ENCODE measurements at regions of chr2 and their contacts with region 1.

Region 1: GRCh38 chr2:200811336-200812121 is at the start of gene BZW1:
- DNase-seq: peak; percentile 94
- ATAC-seq: peak; percentile 80
- H3K4me3 Mint-ChIP-seq: peak within 1 kb of the TSS; percentile 98
- H3K27ac Mint-ChIP-seq: peak within 1 kb of the TSS; percentile 99
- H3K4me1 Mint-ChIP-seq: peaks cover 34% of the 10 kb centered on the region
- H3K27me3 Mint-ChIP-seq: no peaks in the 10 kb centered on the region
- CTCF ChIP-seq: no peak
- total RNA-seq, gene BZW1: 174 and 197 TPM in 2 replicates

Region 2: DNA sequence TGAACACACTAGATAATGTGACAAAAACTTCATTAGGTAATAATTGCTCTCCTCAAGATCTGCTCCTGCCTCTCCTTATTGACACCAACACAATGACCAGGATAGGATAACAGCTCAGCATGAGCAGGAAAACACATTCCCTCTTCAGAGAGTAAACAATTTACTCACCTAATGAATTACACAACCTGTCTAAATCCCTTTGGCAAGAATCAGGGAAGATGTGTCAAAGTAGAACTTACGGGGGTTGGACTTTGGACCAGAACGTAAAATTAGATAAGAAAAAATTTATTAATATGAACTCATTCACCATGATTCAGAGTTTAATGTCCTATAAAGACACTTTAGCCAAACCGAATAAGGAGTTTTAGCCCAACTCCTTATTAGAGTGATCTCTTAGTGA is 1866.0 kb before region 1 on chr2:
- CTCF ChIA-PET with region 1: no interaction called
- POLR2A ChIA-PET with region 1: no interaction called
- intact Hi-C with region 1: no loop called
- DNase-seq: no peak
- ATAC-seq: no peak
- H3K4me3 Mint-ChIP-seq: no peak overlapping the region
- H3K27ac Mint-ChIP-seq: no peak overlapping the region
- H3K4me1 Mint-ChIP-seq: no peaks in the 10 kb centered on the region
- H3K27me3 Mint-ChIP-seq: no peaks in the 10 kb centered on the region
- CTCF ChIP-seq: no peak

Region 3: DNA sequence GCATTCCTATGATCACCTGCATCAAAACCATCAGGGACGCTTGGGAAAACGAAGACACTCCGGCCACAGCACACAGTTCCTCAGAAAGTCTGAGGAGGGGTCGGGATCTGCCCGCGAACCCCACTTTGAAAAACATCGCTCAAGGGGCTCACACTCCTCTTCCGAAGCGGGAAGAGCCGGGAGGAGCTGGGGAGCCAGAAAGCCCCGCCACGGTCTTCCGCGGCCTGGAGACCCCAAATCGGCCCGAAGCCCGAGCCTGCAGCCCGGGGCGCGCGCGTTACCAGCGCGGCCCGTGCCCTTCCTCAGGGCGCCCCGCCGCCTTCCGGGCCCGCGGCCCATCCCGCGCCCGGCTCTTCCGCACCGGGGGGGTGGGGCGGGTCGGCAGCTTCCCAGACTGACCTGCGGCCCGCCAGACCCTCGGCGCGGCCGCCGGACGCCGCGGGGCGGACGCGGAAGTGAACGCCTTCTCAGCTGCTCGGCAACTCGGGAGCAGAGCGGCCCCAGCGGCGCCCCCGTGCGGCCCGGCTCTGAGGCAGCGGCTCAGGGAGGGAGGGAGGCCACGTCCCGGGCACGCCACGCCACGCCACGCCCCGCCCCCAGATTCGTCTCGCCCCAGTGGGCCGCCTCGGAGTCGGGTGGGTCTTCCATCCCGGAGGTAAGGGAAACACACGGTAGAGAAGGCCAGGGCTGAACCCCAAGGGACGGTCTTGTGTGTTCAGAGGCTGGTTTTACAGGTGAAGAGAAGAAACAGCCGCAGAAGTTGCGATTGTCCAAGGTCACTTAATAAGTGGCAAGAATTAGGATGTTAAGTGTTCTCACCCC is 301.7 kb before region 1 on chr2 and contains the start of gene KCTD18:
- CTCF ChIA-PET with region 1: no interaction called
- POLR2A ChIA-PET with region 1: interaction called, 7 read pairs
- intact Hi-C with region 1: loop called (anchors 5 kb)
- DNase-seq: peak; percentile 93
- ATAC-seq: peak; percentile 99
- H3K4me3 Mint-ChIP-seq: peak within 1 kb of the TSS; percentile 90
- H3K27ac Mint-ChIP-seq: peak within 1 kb of the TSS; percentile 88
- H3K4me1 Mint-ChIP-seq: peaks cover 27% of the 10 kb centered on the region
- H3K27me3 Mint-ChIP-seq: peaks cover 2% of the 10 kb centered on the region
- CTCF ChIP-seq: peak; percentile 62
- total RNA-seq, gene KCTD18: 18.5 and 18.9 TPM in 2 replicates

Region 4: DNA sequence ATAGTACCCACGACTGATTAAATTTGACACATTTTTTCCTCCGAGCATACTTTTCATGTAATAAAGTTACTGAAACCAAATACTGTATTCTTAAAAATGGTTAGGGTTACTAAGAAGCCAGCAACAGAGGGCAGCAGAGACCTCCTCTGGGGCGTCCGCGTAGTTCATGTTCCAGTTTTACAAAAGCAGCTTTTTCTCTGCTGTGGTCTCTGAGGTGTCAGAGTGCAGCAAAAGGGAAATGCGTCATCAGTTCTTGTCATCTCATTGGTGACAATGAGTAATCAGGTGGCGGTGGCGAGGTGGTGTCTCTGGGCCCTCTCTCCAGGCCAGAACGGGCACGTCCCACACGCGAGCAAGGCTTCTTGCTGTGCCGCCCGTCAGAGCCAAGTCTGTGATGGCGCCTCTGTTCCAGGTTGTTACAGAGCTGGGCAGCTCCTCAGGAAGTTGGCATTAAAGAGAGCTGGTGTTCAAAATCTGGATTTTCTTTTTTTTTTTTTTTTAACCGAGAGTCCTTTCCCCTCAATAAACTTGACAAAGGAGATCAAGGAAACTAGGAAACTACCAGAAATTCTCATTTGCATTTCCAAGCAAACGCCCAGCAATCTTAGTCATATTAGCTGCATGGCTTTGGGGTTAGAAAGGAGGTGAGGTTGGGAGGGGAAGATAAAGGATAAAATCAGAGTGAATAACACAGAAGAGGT is 98.4 kb before region 1 on chr2:
- CTCF ChIA-PET with region 1: interaction called, 5 read pairs
- POLR2A ChIA-PET with region 1: interaction called, 28 read pairs
- intact Hi-C with region 1: loop called (anchors 1 kb)
- DNase-seq: peak; percentile 68
- ATAC-seq: peak; percentile 99
- H3K4me3 Mint-ChIP-seq: peak overlapping the region; percentile 76
- H3K27ac Mint-ChIP-seq: peak overlapping the region; percentile 95
- H3K4me1 Mint-ChIP-seq: peaks cover 16% of the 10 kb centered on the region
- H3K27me3 Mint-ChIP-seq: peaks cover 2% of the 10 kb centered on the region
- CTCF ChIP-seq: no peak

Region 5: GRCh38 chr2:200963124-200963917 is 151.8 kb after region 1 on chr2 and contains the start of gene ORC2:
- CTCF ChIA-PET with region 1: no interaction called
- POLR2A ChIA-PET with region 1: interaction called, 3 read pairs
- intact Hi-C with region 1: loop called (anchors 1 kb)
- DNase-seq: peak; percentile 94
- ATAC-seq: peak; percentile 93
- H3K4me3 Mint-ChIP-seq: peak within 1 kb of the TSS; percentile 97
- H3K27ac Mint-ChIP-seq: peak within 1 kb of the TSS; percentile 97
- H3K4me1 Mint-ChIP-seq: peaks cover 63% of the 10 kb centered on the region
- H3K27me3 Mint-ChIP-seq: no peaks in the 10 kb centered on the region
- CTCF ChIP-seq: no peak
- total RNA-seq, gene ORC2: 36.8 and 38.1 TPM in 2 replicates

Region 6: DNA sequence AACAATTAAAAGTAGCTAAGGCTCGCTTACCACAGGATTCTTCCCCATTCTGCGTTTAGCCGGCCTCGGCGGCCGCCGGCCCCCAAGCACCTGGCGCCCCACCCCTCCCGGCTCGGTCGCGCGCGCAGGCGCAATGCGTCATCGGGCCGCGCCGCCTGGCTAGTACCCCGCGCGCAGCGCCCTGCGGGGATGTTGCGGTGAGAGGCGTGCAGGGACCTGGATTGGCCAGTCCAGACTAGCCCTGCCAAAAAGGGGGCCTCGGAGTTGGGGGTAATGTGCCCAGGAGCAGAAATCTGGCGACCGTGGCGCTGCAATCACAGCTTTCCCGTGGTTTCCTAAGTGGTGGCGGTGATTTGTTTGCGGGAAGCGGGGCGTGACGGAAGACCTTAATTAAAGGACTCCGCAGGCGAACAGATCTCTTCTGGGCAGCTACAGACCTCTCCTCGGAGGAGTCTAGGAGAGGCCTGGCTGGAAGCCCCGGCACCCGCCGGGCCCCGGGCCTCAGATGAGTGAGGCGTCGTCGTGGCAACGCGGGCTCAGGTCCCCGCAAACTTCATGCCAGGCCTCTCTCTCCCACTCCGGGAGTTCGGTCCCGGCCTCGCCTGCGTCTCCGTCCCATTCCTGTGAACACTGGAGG is 831.2 kb after region 1 on chr2:
- CTCF ChIA-PET with region 1: no interaction called
- POLR2A ChIA-PET with region 1: no interaction called
- intact Hi-C with region 1: loop called (anchors 5 kb)
- DNase-seq: peak; percentile 91
- ATAC-seq: peak; percentile 86
- H3K4me3 Mint-ChIP-seq: peak overlapping the region; percentile 95
- H3K27ac Mint-ChIP-seq: peak overlapping the region; percentile 91
- H3K4me1 Mint-ChIP-seq: peaks cover 9% of the 10 kb centered on the region
- H3K27me3 Mint-ChIP-seq: no peaks in the 10 kb centered on the region
- CTCF ChIP-seq: no peak

Region 7: DNA sequence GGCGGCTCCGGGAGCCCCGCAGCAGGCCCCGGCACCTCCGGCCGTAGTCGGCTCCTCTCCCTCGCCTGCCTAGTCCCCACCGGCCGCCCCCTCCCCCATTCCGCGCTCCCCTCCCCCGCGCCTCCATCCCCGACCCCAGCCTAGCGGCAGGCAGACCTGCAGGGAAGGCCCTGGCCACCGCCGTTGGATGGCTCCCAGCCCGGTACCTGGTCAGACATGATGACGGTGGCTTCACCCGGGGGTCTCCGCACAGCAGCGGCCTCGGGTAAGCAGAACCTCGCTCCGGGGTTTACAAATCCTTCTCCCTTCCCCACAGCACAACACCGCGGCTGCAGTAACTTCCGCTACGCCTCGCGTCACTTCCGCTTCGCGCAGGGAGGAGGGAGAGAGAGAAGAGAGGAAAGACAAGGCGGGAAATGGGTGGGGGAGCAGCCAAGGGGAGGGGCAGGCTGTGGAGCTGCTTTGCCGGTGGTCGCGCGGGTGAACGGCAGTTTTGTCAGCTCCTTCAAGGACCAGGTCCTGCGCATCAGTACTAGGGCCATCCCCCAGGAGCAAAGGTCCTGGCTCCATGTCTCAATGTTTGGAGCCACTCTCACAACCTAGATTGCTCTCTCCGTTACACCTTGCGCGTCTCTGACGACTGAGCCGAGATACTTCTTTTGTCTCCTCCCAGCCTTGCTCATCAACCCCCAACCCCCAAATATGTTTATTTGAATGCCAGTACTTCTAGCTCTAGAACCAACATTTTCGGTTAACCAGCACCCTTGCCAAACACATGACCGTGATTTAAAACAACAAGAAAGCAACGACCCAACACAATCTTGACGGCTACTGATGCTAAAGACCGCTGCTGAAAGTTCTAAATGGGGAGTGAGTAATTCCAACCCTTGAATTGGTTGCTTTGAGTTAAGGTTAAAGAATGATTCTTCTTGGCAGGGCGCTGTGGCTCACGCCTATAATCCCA is 1427.0 kb after region 1 on chr2 and contains the start of gene SUMO1:
- CTCF ChIA-PET with region 1: no interaction called
- POLR2A ChIA-PET with region 1: no interaction called
- intact Hi-C with region 1: loop called (anchors 2 kb)
- DNase-seq: peak; percentile 86
- ATAC-seq: peak; percentile 94
- H3K4me3 Mint-ChIP-seq: peak within 1 kb of the TSS; percentile 100
- H3K27ac Mint-ChIP-seq: peak within 1 kb of the TSS; percentile 93
- H3K4me1 Mint-ChIP-seq: peaks cover 36% of the 10 kb centered on the region
- H3K27me3 Mint-ChIP-seq: no peaks in the 10 kb centered on the region
- CTCF ChIP-seq: no peak
- total RNA-seq, gene SUMO1: 78.8 and 83.9 TPM in 2 replicates